PC-3 (cell line): ENCODE measurements at regions of chr15 and their contacts with region 1.

Region 1: DNA sequence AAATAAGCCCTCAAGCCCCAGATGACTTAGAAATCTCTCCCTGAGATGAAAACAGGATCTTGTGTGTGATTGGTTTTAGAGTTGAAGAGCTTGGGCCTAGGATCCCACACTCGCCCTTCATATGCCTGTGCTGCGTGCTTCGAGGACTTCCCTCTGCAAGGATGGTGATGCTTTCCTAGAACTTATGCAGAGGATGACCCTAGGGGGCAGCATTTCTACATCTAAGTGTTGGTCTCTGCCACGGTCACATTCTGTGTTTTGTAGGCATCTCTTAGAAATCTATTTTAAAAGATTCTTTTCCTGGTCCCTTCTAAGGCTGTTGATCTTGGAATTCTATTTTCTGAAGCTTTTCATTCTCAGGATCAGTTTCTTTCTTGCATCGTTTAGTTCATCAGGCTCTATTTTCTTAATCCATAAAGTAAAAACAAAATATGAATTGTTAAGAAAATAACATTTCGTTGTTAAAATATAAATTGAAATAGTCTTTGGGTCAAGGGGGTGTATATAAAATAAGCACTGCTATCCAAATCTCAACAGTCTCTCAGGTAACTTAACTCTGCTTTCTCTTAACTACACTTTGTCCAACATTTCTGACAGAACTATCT is 45.7 kb downstream of the WDR76 start:
- DNase-seq: peak; percentile 73
- ATAC-seq: peak; percentile 93
- H3K4me3 ChIP-seq: no peak overlapping the region
- H3K27ac ChIP-seq: no peak overlapping the region
- H3K4me1 ChIP-seq: no peaks in the 10 kb centered on the region
- H3K27me3 ChIP-seq: no peaks in the 10 kb centered on the region
- CTCF ChIP-seq: peak; percentile 82

Region 2: DNA sequence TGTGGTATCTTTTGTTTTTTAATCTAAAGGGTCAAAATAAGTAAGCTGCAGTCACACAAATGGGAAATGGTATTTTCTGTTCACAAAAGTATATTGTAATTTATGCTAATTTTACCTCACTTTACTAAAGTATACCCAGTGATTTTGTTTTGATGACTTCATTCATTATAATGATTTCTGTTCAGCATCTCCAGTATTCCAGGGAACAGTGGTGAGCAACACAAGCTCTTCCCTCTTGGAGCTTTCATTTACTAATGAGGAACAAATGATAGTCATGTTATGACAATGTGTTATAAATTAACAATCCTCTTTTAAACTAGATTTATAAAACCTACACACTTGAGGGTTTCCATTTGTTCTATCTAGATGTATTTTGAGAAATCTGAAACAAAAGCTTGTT is 643.9 kb after region 1 on chr15:
- CTCF ChIA-PET with region 1: interaction called, 14 read pairs
- POLR2A ChIA-PET with region 1: no interaction called
- intact Hi-C with region 1: no loop called
- DNase-seq: no peak
- ATAC-seq: no peak
- H3K4me3 ChIP-seq: no peak overlapping the region
- H3K27ac ChIP-seq: no peak overlapping the region
- H3K4me1 ChIP-seq: no peaks in the 10 kb centered on the region
- H3K27me3 ChIP-seq: no peaks in the 10 kb centered on the region
- CTCF ChIP-seq: no peak